Activated naive CD8-positive, alpha-beta T cell treated with anti-CD3 and anti-CD28 coated beads, Interleukin-2, amount 10 ng/mL, durations not matched to agents 7 days and 5 days (primary cell): ENCODE measurements at regions of chr1 and their contacts with region 1.

Region 1: DNA sequence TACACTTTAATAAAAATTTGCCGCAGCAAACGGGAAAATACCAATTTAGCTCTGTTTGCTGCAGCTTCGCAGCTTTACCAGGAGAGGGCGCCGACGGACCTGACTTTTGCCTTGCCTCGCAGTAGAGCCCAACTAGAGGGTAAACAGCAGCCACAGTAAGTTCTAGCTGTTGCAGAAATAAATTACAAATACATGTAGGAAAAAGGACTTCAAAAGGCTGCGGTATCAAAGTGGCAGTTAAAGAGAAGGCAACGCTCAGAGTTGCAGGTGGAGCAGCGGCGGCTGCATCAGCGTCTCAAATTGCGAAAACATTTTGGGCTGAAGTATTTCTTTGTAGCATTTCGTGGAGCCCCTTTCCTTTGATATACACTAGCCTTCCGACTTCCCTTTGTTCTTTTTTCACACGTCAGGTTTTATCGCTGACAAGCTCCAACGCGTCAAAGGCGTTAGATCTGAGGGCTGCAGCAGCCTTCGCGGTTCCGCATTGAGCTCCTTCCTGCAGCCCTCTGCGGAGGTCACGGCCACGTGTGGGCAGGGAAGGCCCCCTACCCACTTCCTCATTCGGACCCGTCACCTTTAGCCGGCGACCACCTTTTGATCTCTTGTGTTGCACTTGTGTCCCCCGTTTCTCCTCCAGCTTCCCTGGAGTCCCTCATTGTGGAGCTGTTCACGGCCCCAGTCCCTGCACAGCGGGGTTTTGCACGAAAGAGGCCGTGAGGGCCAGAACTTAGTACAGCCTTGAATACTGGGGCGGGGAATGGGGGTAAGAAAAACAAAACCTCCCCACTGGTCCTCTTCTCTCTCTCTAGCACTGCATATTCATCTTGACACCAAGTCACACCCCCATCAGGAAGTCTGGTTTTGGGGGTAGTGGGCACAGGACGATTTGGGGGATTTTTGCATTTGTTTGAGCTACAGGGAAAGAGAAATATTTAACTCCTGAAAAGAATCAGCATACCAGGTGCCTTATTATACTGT is 72.8 kb downstream of the S1PR1 start:
- DNase-seq: peak; percentile 77
- ATAC-seq: peak; percentile 83
- H3K4me3 Mint-ChIP-seq: peak overlapping the region; percentile 76
- H3K27ac Mint-ChIP-seq: peak overlapping the region; percentile 96
- H3K4me1 Mint-ChIP-seq: peaks cover 59% of the 10 kb centered on the region
- H3K27me3 Mint-ChIP-seq: no peaks in the 10 kb centered on the region

Region 2: DNA sequence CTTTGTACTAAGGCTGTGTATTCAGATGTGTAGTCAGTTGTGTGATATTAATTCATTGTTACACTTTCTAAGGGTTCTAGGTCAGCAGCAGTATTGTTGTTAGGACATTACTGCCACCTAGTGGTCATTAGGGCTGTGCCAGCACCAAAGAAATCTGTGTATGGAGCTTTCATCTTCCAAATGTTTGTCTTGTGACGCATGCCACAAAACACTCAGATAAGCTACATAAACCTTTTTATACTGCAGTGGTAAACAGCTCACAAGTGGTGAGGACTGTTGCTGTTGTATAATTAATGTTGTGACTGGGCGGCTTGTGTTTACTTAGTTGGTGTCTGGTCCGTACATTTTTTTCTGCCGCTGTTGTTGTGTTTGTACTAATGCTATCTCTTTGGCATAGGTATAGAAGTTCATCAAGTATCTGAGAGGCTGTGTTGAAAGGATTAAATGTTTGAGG is 21.1 kb before region 1 on chr1:
- POLR2A ChIA-PET with region 1: interaction called, 11 read pairs
- DNase-seq: no peak
- ATAC-seq: peak; percentile 46
- H3K4me3 Mint-ChIP-seq: no peak overlapping the region
- H3K27ac Mint-ChIP-seq: peak overlapping the region; percentile 62
- H3K4me1 Mint-ChIP-seq: peaks cover 59% of the 10 kb centered on the region
- H3K27me3 Mint-ChIP-seq: peaks cover 2% of the 10 kb centered on the region

Region 3: DNA sequence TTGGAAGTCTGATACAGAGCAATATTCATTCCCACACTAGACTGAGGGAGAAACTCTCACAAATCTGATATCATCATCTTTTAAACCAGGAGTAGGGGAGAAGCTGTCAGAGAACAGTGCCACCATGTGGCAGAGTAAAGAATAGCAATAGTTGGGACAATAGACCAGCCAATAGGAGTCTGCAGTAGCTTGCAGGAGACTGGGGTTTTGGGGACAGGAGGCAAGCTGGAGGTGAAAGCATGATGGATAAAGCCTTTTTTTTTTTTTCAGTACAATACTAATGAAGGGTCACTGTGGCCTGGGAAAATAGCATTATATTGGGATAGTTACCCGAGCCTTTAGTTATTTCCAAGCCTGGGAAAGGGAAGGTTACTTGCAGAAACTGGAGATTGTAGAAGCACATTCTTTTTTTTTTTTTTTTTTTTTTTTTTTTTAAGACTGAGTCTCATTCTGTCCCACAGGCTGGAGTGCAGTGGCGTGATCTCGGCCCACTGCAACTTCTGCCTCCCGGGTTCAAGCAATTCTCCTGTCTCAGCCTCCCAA is 47.9 kb after region 1 on chr1:
- POLR2A ChIA-PET with region 1: interaction called, 18 read pairs
- DNase-seq: no peak
- ATAC-seq: peak; percentile 96
- H3K4me3 Mint-ChIP-seq: no peak overlapping the region
- H3K27ac Mint-ChIP-seq: no peak overlapping the region
- H3K4me1 Mint-ChIP-seq: peaks cover 8% of the 10 kb centered on the region
- H3K27me3 Mint-ChIP-seq: peaks cover 6% of the 10 kb centered on the region